Activated T-helper 2 cell treated with anti-CD3 and anti-CD28 coated beads, Interferon-gamma antibody, Interleukin-2, Interleukin-4, amounts not matched to agents 10 μg/mL and 5 μg/mL and 100 μg/mL, durations not matched to agents 14 hours and 24 hours and 36 hours (primary cell): ENCODE measurements at regions of chr6 and their contacts with region 1.

Region 1: DNA sequence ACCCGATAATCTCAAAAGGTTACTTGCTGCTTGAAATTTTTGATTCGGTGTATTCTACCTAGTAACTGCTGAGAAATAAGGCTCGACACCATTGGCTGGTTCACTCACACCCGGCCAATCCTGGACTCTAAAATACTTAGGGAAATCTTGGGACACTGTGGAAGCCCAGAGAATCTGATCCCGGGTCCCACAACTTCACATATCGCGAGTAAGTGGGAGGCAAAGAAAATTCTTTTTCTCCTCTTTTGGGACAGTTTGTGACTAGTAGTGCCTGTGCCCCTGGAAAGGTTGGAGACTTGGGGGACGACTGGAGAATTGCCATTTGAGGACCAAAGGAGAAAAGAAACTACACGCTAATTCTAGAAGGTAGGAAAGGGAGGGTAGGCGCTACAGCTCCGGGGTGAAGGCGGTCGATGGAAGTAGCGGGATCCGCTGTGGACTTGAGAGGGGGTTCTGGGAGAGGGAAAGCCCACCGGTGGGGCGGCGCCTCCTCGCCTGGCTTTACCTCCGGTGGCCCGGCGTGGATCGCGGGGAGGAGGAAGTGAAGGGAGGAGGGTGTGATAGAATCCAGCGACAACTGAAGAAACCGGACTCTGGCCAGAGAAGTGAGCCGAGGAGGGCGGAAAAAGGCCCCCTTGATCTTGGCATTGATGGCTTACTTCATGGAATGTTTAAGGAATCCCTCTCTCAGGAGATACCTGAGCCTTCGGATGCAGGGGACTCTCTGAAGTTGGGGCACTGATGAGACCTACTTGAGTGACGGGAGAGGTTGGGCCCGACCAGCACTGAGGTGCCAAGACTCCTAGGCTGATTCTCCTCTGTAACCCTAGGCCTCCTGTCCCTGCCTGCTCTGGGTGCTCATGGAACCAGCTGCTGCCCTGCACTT is 18.8 kb upstream of the BTN3A3 start:
- DNase-seq: peak; percentile 30
- H3K4me3 Mint-ChIP-seq: no peak overlapping the region
- H3K27ac Mint-ChIP-seq: no peak overlapping the region
- H3K4me1 Mint-ChIP-seq: peaks cover 13% of the 10 kb centered on the region
- H3K27me3 Mint-ChIP-seq: no peaks in the 10 kb centered on the region

Region 2: DNA sequence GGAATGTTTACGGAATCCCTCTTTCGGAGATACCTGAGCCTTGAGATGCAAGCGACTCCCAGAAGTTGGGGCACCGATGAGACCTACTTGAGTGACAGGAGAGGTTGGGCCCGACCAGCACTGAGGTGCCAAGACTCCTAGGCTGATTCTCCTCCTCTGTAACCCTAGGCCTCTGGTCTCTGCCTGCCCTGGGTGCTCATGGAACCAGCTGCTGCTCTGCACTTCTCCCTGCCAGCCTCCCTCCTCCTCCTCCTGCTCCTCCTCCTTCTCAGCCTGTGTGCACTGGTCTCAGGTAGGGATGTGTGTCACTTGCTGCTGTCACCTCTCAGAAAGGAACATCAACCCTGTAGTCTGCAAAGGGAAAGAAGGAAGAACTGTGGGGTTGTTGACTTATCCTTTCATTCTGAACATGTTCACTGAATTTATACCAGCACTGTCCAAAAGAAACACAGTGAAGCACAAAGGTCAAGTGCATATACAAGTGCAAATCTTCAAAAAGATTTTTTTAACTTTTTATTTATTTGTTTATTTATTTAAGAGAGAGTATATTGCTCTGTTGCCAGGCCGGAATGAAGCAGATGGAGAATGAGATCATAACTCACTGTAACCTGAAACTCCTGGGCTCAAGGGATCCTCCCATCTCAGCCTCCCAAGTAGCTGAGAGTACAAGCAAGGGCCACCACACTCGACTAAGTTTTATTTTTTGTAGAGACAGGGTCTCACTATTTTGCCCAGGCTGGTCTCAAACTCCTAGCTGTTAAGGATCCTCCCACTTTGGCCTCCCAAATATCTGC is 37.7 kb before region 1 on chr6:
- intact Hi-C with region 1: loop called (anchors 5 kb)
- DNase-seq: no peak
- H3K4me3 Mint-ChIP-seq: peak overlapping the region; percentile 99
- H3K27ac Mint-ChIP-seq: peak overlapping the region; percentile 98
- H3K4me1 Mint-ChIP-seq: peaks cover 27% of the 10 kb centered on the region
- H3K27me3 Mint-ChIP-seq: no peaks in the 10 kb centered on the region

Region 3: DNA sequence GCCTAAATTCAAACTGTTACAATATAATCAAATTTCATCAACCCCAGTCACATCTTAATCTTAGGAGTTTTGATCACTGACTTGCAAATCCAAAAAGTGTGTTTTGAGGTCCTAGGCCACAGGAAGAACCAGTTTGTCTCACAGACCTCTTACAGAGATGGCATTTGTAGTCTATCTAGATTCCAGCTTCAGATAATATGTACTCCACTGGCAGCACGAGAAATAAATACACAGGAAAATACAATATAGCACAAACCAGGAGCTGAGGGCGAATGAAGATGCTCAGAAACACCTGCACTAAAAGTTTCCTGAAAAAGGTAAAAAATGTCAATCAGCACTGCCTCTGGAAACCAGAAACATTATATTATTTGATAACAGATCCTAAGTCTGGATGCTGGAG is 18.2 kb after region 1 on chr6:
- intact Hi-C with region 1: loop called (anchors 2 kb)
- DNase-seq: no peak
- H3K4me3 Mint-ChIP-seq: peak overlapping the region; percentile 96
- H3K27ac Mint-ChIP-seq: peak overlapping the region; percentile 97
- H3K4me1 Mint-ChIP-seq: peaks cover 30% of the 10 kb centered on the region
- H3K27me3 Mint-ChIP-seq: no peaks in the 10 kb centered on the region

Region 4: GRCh38 chr6:26472549-26473290 is 51.2 kb after region 1 on chr6:
- intact Hi-C with region 1: no loop called
- DNase-seq: no peak
- H3K4me3 Mint-ChIP-seq: peak overlapping the region; percentile 59
- H3K27ac Mint-ChIP-seq: peak overlapping the region; percentile 100
- H3K4me1 Mint-ChIP-seq: peaks cover 31% of the 10 kb centered on the region
- H3K27me3 Mint-ChIP-seq: no peaks in the 10 kb centered on the region